Activated naive CD4-positive, alpha-beta T cell treated with anti-CD3 and anti-CD28 coated beads for 36 hours (primary cell): ENCODE measurements at regions of chr14 and their contacts with region 1.

Region 1: GRCh38 chr14:62126879-62127478 is 364.8 kb downstream of the SNAPC1 start:
- DNase-seq: peak; percentile 5
- H3K4me3 Mint-ChIP-seq: no peak overlapping the region
- H3K27ac Mint-ChIP-seq: no peak overlapping the region
- H3K4me1 Mint-ChIP-seq: no peaks in the 10 kb centered on the region
- H3K27me3 Mint-ChIP-seq: peaks cover 29% of the 10 kb centered on the region

Region 2: GRCh38 chr14:61269321-61270083 is 857.5 kb before region 1 on chr14:
- CTCF ChIA-PET with region 1: no interaction called
- intact Hi-C with region 1: loop called (anchors 1 kb)
- DNase-seq: peak; percentile 91
- H3K4me3 Mint-ChIP-seq: peak overlapping the region; percentile 67
- H3K27ac Mint-ChIP-seq: no peak overlapping the region
- H3K4me1 Mint-ChIP-seq: no peaks in the 10 kb centered on the region
- H3K27me3 Mint-ChIP-seq: peaks cover 10% of the 10 kb centered on the region

Region 3: GRCh38 chr14:61761959-61762786 is 364.8 kb before region 1 on chr14 and contains the start of gene SNAPC1:
- CTCF ChIA-PET with region 1: no interaction called
- intact Hi-C with region 1: loop called (anchors 10 kb)
- DNase-seq: peak; percentile 99
- H3K4me3 Mint-ChIP-seq: peak within 1 kb of the TSS; percentile 97
- H3K27ac Mint-ChIP-seq: peak within 1 kb of the TSS; percentile 96
- H3K4me1 Mint-ChIP-seq: peaks cover 40% of the 10 kb centered on the region
- H3K27me3 Mint-ChIP-seq: no peaks in the 10 kb centered on the region
- total RNA-seq, gene SNAPC1: 8.7 to 9.2 TPM

Region 4: GRCh38 chr14:61894452-61895077 is 232.4 kb before region 1 on chr14:
- CTCF ChIA-PET with region 1: interaction called, 43 read pairs
- intact Hi-C with region 1: loop called (anchors 1 kb)
- DNase-seq: peak; percentile 82
- H3K4me3 Mint-ChIP-seq: no peak overlapping the region
- H3K27ac Mint-ChIP-seq: no peak overlapping the region
- H3K4me1 Mint-ChIP-seq: peaks cover 14% of the 10 kb centered on the region
- H3K27me3 Mint-ChIP-seq: no peaks in the 10 kb centered on the region

Region 5: DNA sequence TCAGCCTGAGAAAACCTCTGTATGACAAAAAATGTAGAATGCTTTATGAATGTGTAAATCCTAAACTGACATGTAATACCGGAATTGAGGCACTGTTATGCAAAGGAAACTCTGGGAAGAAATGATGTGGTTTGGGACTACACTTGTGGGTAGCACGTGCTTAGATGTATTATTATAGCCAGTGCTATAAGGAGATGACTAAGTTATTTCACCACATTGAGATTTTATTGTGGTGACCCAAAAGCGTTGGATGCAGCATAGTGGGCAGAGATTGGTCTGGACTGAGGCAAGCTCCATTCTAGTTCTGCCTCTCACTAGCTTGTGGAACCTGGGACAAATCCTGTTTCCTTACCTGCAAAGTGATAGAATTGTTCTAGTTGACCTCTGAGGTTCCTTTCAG is 192.6 kb before region 1 on chr14:
- CTCF ChIA-PET with region 1: interaction called, 11 read pairs
- intact Hi-C with region 1: no loop called
- DNase-seq: peak; percentile 31
- H3K4me3 Mint-ChIP-seq: no peak overlapping the region
- H3K27ac Mint-ChIP-seq: no peak overlapping the region
- H3K4me1 Mint-ChIP-seq: peaks cover 8% of the 10 kb centered on the region
- H3K27me3 Mint-ChIP-seq: peaks cover 27% of the 10 kb centered on the region